ENCODE measurements at regions of chr16 and their contacts with region 1.

Region 1: DNA sequence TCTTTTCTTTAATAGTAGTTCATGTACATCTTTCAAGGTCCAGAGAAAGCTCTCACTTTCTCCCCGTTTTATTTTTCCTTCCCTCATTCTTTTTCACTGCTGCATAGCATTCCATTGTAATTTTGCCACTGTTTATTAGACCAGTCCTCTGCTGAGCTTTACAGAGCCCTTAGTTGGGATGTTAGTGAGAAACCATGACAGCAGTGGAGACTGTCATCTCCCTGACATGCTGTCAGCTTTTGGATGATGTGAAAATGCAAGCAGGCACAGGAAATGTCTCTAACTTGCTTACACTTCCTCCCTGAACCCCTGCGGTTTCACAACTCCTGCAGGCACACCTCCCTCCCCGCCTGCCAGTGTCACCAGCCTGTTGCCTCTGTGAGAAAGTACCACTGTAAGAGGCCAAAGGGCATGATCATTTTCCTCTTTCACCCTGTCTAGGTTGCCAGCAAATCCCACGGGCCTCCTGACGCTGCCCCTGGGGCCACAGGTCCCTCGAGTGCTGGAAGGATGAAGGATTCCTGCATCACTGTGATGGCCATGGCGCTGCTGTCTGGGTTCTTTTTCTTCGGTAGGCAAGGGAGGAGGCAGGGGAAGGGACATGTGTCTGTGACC is at the start of gene ITGAL:
- DNase-seq: peak; percentile 87 to 97 (median 89)
- H3K4me3 ChIP-seq: peak within 1 kb of the TSS; percentile 77 to 96
- H3K4me3 Mint-ChIP-seq: peak within 1 kb of the TSS; percentile 98 to 99 (median 98)
- H3K27ac ChIP-seq: peak within 1 kb of the TSS; percentile 89
- H3K27ac Mint-ChIP-seq: peak within 1 kb of the TSS; percentile 93 to 97 (median 95)
- H3K4me1 ChIP-seq: peaks cover 67% of the 10 kb centered on the region
- H3K4me1 Mint-ChIP-seq: peaks cover 33 to 75% (median 45%) of the 10 kb centered on the region in 4 donors
- H3K27me3 ChIP-seq: no peaks in the 10 kb centered on the region
- H3K27me3 Mint-ChIP-seq: no peaks in the 10 kb centered on the region
- total RNA-seq, gene ITGAL: 648 to 657 TPM

Region 2: GRCh38 chr16:30445408-30446202 is 26.8 kb before region 1 on chr16 and contains the start of gene SEPHS2:
- CTCF ChIA-PET with region 1: interaction called, 143 read pairs
- POLR2A ChIA-PET with region 1: interaction called, 1,162 read pairs
- intact Hi-C with region 1: loop called (anchors 1 kb)
- DNase-seq: peak; percentile 93 to 98 (median 94)
- H3K4me3 ChIP-seq: peak within 1 kb of the TSS; percentile 92 to 94
- H3K4me3 Mint-ChIP-seq: peak within 1 kb of the TSS; percentile 89 to 98 (median 96)
- H3K27ac ChIP-seq: peak within 1 kb of the TSS; percentile 96
- H3K27ac Mint-ChIP-seq: peak within 1 kb of the TSS; percentile 87 to 98 (median 96)
- H3K4me1 ChIP-seq: peaks cover 42% of the 10 kb centered on the region
- H3K4me1 Mint-ChIP-seq: peaks cover 24 to 44% (median 36%) of the 10 kb centered on the region in 4 donors
- H3K27me3 ChIP-seq: no peaks in the 10 kb centered on the region
- H3K27me3 Mint-ChIP-seq: no peaks in the 10 kb centered on the region
- total RNA-seq, gene SEPHS2: 42.0 to 44.4 TPM

Region 3: DNA sequence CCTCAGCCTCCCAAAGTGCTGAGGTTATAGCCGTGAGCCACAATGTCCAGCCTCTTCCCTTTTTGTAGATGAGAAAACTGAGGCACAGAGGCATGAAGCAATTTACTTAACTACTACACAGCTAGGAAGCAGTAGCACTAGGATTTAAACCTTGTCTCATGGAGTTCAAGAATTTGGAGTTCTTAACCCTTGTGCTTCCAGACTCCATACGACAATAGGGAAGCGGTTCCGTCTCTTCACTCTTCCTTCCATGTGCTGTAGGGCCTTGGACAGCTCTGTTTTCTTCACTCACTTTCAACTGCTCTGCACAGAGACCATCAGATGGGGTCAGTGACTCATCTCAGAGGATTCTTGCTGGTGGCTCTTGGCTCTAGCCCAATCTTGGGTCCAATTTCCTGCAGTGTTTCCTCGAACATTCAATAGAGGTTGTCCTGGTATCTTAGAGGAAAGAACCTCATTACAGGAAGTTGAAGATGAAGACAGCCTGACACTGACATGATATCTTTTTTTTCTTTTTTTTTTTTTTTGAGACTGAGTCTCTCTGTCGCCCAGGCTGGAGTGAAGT is 19.4 kb after region 1 on chr16:
- CTCF ChIA-PET with region 1: interaction called, 9 read pairs
- POLR2A ChIA-PET with region 1: interaction called, 379 read pairs
- intact Hi-C with region 1: loop called (anchors 2 kb)
- DNase-seq: peak in 1 of 5 donors; percentile 72
- H3K4me3 ChIP-seq: no peak overlapping the region
- H3K4me3 Mint-ChIP-seq: peak overlapping the region in 2 of 8 donors; percentile 21 to 39
- H3K27ac ChIP-seq: no peak overlapping the region
- H3K27ac Mint-ChIP-seq: peak overlapping the region; percentile 11 to 89 (median 74)
- H3K4me1 ChIP-seq: peaks cover 25% of the 10 kb centered on the region
- H3K4me1 Mint-ChIP-seq: peaks cover 13 to 37% (median 26%) of the 10 kb centered on the region in 4 donors
- H3K27me3 ChIP-seq: no peaks in the 10 kb centered on the region
- H3K27me3 Mint-ChIP-seq: no peaks in the 10 kb centered on the region

Region 4: DNA sequence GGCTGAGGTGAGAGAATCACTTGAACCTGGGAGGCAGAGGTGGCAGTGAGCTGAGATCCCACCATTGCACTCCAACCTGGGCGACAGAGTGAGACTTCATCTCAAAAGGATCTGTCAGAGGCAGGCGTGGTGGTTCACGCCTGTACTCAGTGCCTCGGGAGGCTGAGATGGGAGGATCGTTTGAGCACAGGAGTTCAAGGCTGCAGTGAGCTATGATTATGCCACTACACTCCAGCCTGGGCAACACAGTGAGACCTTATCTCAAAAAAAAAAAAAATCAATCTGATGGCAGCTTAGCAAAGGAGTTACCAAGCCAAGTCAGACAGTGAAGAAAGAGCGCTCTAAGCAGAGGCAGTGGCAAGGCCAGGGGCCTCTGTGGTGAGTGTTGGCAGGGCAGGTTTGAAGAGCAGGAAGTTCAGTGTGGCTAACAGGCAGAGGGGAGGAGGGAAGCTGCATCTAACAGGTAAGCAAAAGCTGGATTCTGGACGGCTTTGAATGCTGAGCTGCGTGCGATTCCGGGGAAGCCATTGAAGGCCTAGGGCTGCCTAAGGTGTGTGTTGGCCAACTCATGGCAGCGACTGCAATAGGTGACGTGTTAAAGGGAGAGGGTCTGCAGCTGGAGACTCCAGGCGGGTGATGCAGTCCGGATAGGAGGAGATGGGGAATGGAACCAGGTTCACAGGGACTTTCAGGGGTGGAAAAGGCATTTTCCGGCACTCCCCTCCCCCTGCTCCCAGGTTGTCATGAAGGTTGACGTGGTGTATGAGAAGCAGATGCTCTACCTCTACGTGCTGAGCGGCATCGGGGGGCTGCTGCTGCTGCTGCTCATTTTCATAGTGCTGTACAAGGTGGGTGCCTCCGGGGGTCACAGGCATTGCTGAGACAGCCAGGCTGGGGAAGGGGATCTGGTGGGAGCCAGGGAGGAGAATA is 47.0 kb after region 1 on chr16:
- CTCF ChIA-PET with region 1: no interaction called
- POLR2A ChIA-PET with region 1: interaction called, 13 read pairs
- intact Hi-C with region 1: loop called (anchors 10 kb)
- DNase-seq: no peak
- H3K4me3 ChIP-seq: no peak overlapping the region
- H3K4me3 Mint-ChIP-seq: no peak overlapping the region
- H3K27ac ChIP-seq: no peak overlapping the region
- H3K27ac Mint-ChIP-seq: peak overlapping the region in 6 of 7 donors; percentile 2 to 63 (median 56)
- H3K4me1 ChIP-seq: no peaks in the 10 kb centered on the region
- H3K4me1 Mint-ChIP-seq: peaks cover 4 to 15% (median 7%) of the 10 kb centered on the region in 4 donors
- H3K27me3 ChIP-seq: no peaks in the 10 kb centered on the region
- H3K27me3 Mint-ChIP-seq: no peaks in the 10 kb centered on the region

Region 5: DNA sequence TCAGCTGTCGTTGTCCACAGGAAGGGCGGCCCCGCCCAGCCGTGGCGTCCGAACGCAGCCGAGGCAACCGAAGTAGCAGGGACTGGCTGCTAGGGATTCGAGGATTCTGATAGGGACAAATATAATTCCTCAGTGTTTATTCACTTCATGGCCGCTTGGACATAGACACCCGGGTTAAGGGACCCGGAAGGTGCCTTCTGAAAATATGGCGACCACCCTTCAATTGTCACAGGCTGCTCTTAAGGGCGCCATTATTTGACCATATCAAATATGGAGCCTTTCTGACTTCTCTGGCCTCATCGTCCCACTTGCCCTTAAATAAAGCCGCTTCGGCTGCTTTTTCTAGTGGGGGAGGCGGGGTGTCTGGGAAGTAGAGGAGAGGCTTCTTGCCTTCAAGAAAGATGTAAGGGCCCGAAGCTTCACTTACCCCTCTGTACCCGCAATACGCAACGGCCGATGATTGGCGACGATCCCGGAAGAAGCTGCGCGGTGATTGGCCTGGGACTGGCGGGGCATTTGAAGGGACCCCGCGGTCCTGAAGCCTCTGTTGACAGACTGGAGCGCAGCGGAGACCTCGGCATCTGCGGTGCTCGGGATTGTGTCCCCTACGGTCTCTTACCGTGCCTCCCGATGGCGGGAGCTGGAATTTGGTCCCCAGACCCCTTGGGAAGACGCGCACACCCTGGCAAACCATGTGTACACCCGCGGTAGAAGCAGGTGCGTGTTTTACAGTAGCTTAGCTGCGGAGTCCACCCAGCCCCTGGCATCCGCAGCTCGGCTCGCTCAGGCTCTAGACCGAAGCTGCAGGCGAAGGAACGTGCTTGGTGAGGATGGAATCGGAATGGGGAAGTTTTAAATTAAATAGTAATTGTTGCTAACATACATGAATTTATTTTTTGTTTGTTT is 99.5 kb after region 1 on chr16 and contains the start of gene ZNF688:
- CTCF ChIA-PET with region 1: interaction called, 3 read pairs
- POLR2A ChIA-PET with region 1: interaction called, 16 read pairs
- intact Hi-C with region 1: no loop called
- DNase-seq: peak; percentile 94 to 100 (median 97)
- H3K4me3 ChIP-seq: peak within 1 kb of the TSS; percentile 65 to 71
- H3K4me3 Mint-ChIP-seq: peak within 1 kb of the TSS; percentile 86 to 96 (median 91)
- H3K27ac ChIP-seq: peak within 1 kb of the TSS; percentile 90
- H3K27ac Mint-ChIP-seq: peak within 1 kb of the TSS; percentile 96 to 97 (median 97)
- H3K4me1 ChIP-seq: peaks cover 50% of the 10 kb centered on the region
- H3K4me1 Mint-ChIP-seq: peaks cover 22 to 51% (median 36%) of the 10 kb centered on the region in 4 donors
- H3K27me3 ChIP-seq: no peaks in the 10 kb centered on the region
- H3K27me3 Mint-ChIP-seq: no peaks in the 10 kb centered on the region
- total RNA-seq, gene ZNF688: 21.4 to 22.7 TPM

Region 6: GRCh38 chr16:30677931-30678585 is 205.6 kb after region 1 on chr16:
- CTCF ChIA-PET with region 1: no interaction called
- POLR2A ChIA-PET with region 1: no interaction called
- intact Hi-C with region 1: no loop called
- DNase-seq: no peak
- H3K4me3 ChIP-seq: no peak overlapping the region
- H3K4me3 Mint-ChIP-seq: no peak overlapping the region
- H3K27ac ChIP-seq: no peak overlapping the region
- H3K27ac Mint-ChIP-seq: peak overlapping the region in 1 of 7 donors; percentile 68
- H3K4me1 ChIP-seq: no peaks in the 10 kb centered on the region
- H3K4me1 Mint-ChIP-seq: no peaks in the 10 kb centered on the region
- H3K27me3 ChIP-seq: no peaks in the 10 kb centered on the region
- H3K27me3 Mint-ChIP-seq: no peaks in the 10 kb centered on the region

Region 7: GRCh38 chr16:30844671-30845449 is 372.4 kb after region 1 on chr16:
- CTCF ChIA-PET with region 1: no interaction called
- POLR2A ChIA-PET with region 1: no interaction called
- intact Hi-C with region 1: no loop called
- DNase-seq: peak; percentile 82 to 88 (median 85)
- H3K4me3 ChIP-seq: peak overlapping the region in 1 of 2 donors; percentile 0
- H3K4me3 Mint-ChIP-seq: peak overlapping the region; percentile 31 to 72 (median 58)
- H3K27ac ChIP-seq: no peak overlapping the region
- H3K27ac Mint-ChIP-seq: peak overlapping the region in 6 of 7 donors; percentile 6 to 81 (median 74)
- H3K4me1 ChIP-seq: peaks cover 6% of the 10 kb centered on the region
- H3K4me1 Mint-ChIP-seq: peaks cover 6 to 11% (median 10%) of the 10 kb centered on the region in 4 donors
- H3K27me3 ChIP-seq: no peaks in the 10 kb centered on the region
- H3K27me3 Mint-ChIP-seq: no peaks in the 10 kb centered on the region